Transverse colon (tissue), 4 donors: ENCODE measurements at regions of chr19 and their contacts with region 1.

Region 1: GRCh38 chr19:38155453-38155852 is 68.6 kb downstream of the DPF1 start:
- DNase-seq: no peak
- H3K4me3 ChIP-seq: no peak overlapping the region
- H3K27ac ChIP-seq: no peak overlapping the region
- H3K4me1 ChIP-seq: no peaks in the 10 kb centered on the region
- H3K27me3 ChIP-seq: no peaks in the 10 kb centered on the region
- CTCF ChIP-seq: no peak
- EP300 ChIP-seq: no peak
- POLR2A ChIP-seq: no peak

Region 2: DNA sequence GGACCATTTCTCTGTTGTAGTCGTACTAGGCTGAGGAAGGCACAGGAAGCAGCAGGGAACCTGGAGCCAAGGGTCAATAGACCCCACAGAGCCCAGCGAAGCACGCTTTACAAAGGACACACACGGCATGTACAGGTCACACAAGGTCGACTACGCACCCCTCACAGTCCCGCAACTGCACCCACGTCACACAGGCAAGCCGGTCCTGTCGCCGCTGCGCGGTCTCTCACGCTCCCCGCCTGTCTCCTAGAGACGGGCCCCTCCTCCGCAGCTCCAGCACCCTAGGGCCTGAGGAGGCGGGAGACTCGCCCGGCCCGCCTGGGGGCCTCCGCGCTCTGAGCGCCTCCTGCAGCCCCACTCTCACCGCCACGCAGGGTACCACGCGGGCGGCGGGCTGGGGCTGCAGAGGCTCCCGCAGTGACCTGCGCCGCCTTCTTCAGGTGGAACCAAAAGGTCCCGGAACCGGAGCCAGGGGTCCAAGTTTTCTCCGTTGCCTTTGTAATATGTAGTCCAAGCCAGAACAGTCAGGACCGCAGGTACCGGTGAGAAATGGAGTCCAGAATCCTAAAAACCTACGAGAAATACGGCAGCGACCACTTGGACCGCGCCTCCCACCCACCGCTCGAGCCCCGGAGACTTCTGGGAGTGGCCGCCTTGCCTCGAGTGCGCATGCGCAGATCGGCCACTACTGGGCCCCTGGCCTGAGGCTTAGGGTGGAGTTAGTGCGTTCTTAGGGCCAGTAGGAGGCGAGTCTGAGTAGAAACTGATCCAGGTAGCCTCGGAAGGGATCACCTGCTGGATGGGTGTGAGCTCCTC is 436.1 kb before region 1 on chr19 and contains the start of gene ZNF607:
- in situ Hi-C with region 1: no loop called
- intact Hi-C with region 1: loop called (anchors 10 kb)
- DNase-seq: peak; percentile 92
- H3K4me3 ChIP-seq: peak within 1 kb of the TSS; percentile 87 to 99 (median 94)
- H3K27ac ChIP-seq: peak within 1 kb of the TSS; percentile 91 to 92 (median 92)
- H3K4me1 ChIP-seq: peaks cover 9 to 15% (median 11%) of the 10 kb centered on the region in 4 donors
- H3K27me3 ChIP-seq: no peaks in the 10 kb centered on the region
- CTCF ChIP-seq: peak; percentile 55 to 75 (median 58)
- EP300 ChIP-seq: no peak
- POLR2A ChIP-seq: peak; percentile 78
- total RNA-seq, gene ZNF607: 0.37 to 6.5 (median 2.8) TPM

Region 3: DNA sequence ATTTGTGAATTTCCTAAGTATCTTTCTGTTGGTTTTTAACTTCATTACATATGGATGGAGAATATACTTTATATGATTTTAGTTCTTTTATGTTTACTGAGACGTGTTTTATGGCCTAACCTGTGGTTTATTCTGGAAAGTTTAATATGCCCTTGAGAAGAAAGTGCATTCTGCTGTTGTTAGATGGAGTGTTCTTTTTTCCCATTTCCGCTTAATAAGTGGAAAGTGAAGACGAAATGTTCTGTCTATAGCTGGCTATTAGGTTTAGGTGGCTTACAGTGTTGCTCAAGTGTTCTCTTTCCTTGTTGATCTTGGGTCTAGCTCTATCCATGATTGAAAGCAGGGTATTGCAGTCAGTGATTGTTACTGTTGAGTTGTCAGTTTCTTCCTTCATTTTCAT is 1308.0 kb after region 1 on chr19:
- in situ Hi-C with region 1: no loop called
- intact Hi-C with region 1: no loop called
- DNase-seq: no peak
- H3K4me3 ChIP-seq: no peak overlapping the region
- H3K27ac ChIP-seq: no peak overlapping the region
- H3K4me1 ChIP-seq: no peaks in the 10 kb centered on the region
- H3K27me3 ChIP-seq: no peaks in the 10 kb centered on the region
- CTCF ChIP-seq: no peak
- EP300 ChIP-seq: no peak
- POLR2A ChIP-seq: no peak